Transverse colon (tissue), 4 donors: ENCODE measurements at regions of chr2 and their contacts with region 1.

Region 1: GRCh38 chr2:103902347-103902746 is 951.6 kb upstream of the POU3F3 start:
- DNase-seq: no peak
- H3K4me3 ChIP-seq: no peak overlapping the region
- H3K27ac ChIP-seq: no peak overlapping the region
- H3K4me1 ChIP-seq: no peaks in the 10 kb centered on the region
- H3K27me3 ChIP-seq: no peaks in the 10 kb centered on the region
- CTCF ChIP-seq: no peak
- EP300 ChIP-seq: no peak
- POLR2A ChIP-seq: no peak

Region 2: DNA sequence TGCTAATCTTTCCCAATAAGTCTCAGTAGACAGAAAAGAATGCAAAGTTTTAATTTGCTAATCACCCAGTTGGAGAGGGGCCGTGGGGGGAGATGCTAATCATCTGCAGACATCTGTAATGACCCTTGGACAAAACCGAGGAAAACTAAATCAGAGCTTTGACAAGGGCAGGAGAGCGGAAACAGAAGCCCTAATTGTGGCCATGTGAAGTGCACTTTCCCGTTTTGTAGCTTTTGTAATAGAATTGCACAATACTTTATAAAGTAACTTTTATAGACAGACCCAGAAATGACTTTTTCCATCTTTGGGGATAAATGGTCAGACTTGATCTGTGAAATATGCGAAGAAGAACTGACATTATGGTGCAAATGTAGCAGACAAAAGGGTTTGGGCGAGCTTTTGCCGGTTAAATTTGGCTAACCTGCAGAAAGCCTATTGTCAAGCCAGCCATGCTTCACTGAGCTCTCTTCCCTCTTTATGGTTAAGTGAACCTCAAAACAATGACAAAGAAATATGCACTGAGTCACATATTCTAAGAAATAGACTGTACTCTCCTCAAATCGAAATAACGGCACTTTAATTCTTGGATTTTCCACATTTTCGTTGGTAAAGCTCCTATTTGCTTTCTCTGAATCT is 28.5 kb before region 1 on chr2:
- in situ Hi-C with region 1: no loop called
- intact Hi-C with region 1: loop called (anchors 1 kb)
- DNase-seq: no peak
- H3K4me3 ChIP-seq: no peak overlapping the region
- H3K27ac ChIP-seq: no peak overlapping the region
- H3K4me1 ChIP-seq: no peaks in the 10 kb centered on the region
- H3K27me3 ChIP-seq: no peaks in the 10 kb centered on the region
- CTCF ChIP-seq: no peak
- EP300 ChIP-seq: no peak
- POLR2A ChIP-seq: no peak

Region 3: GRCh38 chr2:104111226-104111625 is 208.9 kb after region 1 on chr2:
- in situ Hi-C with region 1: no loop called
- intact Hi-C with region 1: no loop called
- DNase-seq: no peak
- H3K4me3 ChIP-seq: no peak overlapping the region
- H3K27ac ChIP-seq: no peak overlapping the region
- H3K4me1 ChIP-seq: no peaks in the 10 kb centered on the region
- H3K27me3 ChIP-seq: no peaks in the 10 kb centered on the region
- CTCF ChIP-seq: no peak
- EP300 ChIP-seq: no peak
- POLR2A ChIP-seq: no peak